Transverse colon (tissue), 4 donors: ENCODE measurements at regions of chr13 and their contacts with region 1.

Region 1: GRCh38 chr13:109249780-109250528 is 536.4 kb downstream of the IRS2 start:
- DNase-seq: no peak
- H3K4me3 ChIP-seq: no peak overlapping the region
- H3K27ac ChIP-seq: no peak overlapping the region
- H3K4me1 ChIP-seq: no peaks in the 10 kb centered on the region
- H3K27me3 ChIP-seq: no peaks in the 10 kb centered on the region
- CTCF ChIP-seq: no peak
- EP300 ChIP-seq: no peak
- POLR2A ChIP-seq: no peak

Region 2: GRCh38 chr13:108895220-108895704 is 354.7 kb before region 1 on chr13:
- in situ Hi-C with region 1: no loop called
- intact Hi-C with region 1: no loop called
- DNase-seq: no peak
- H3K4me3 ChIP-seq: no peak overlapping the region
- H3K27ac ChIP-seq: no peak overlapping the region
- H3K4me1 ChIP-seq: no peaks in the 10 kb centered on the region
- H3K27me3 ChIP-seq: no peaks in the 10 kb centered on the region
- CTCF ChIP-seq: peak; percentile 44 to 61 (median 54)
- EP300 ChIP-seq: no peak
- POLR2A ChIP-seq: no peak

Region 3: DNA sequence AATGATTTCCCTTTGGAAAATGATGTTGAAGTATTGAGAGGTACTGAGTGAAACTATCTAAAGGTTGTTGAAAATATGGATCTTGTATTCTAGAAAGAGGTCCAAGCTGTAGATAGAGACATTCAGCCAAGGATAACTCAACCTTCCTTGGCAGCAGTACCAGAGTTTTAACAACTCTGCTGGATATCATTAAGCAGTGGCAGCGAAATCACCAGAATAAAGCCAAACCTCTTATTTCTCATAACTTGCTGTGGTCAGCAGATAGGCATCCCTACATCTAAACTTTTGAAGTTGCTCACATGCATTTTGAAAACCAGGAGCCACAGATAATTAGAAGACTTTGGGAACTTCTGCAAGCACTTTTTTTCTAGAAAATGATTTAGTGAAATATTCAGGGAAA is 23.3 kb before region 1 on chr13:
- in situ Hi-C with region 1: no loop called
- intact Hi-C with region 1: loop called (anchors 1 kb)
- DNase-seq: no peak
- H3K4me3 ChIP-seq: no peak overlapping the region
- H3K27ac ChIP-seq: no peak overlapping the region
- H3K4me1 ChIP-seq: no peaks in the 10 kb centered on the region
- H3K27me3 ChIP-seq: no peaks in the 10 kb centered on the region
- CTCF ChIP-seq: no peak
- EP300 ChIP-seq: no peak
- POLR2A ChIP-seq: no peak